Gastrocnemius medialis (tissue), 4 donors: ENCODE measurements at regions of chr20 and their contacts with region 1.

Region 1: GRCh38 chr20:54219751-54220426 is 12.0 kb downstream of the PFDN4 start:
- DNase-seq: no peak
- ATAC-seq: no peak
- H3K4me3 ChIP-seq: no peak overlapping the region
- H3K27ac ChIP-seq: no peak overlapping the region
- H3K4me1 ChIP-seq: peaks cover 29 to 41% of the 10 kb centered on the region in 2 donors
- H3K27me3 ChIP-seq: no peaks in the 10 kb centered on the region
- CTCF ChIP-seq: peak in 4 of 5 experiments; percentile 26 to 45 (median 36)
- POLR2A ChIP-seq: no peak

Region 2: GRCh38 chr20:54173653-54174456 is 46.0 kb before region 1 on chr20 and contains the start of gene CYP24A1:
- in situ Hi-C with region 1: no loop called
- intact Hi-C with region 1: no loop called
- DNase-seq: no peak
- ATAC-seq: no peak
- H3K4me3 ChIP-seq: peak within 1 kb of the TSS in 1 of 4 donors; percentile 10
- H3K27ac ChIP-seq: no peak within 1 kb of the TSS
- H3K4me1 ChIP-seq: peaks cover 0 to 10% of the 10 kb centered on the region in 2 donors
- H3K27me3 ChIP-seq: peaks cover 59 to 62% (median 60%) of the 10 kb centered on the region in 3 donors
- CTCF ChIP-seq: no peak
- POLR2A ChIP-seq: no peak
- total RNA-seq, gene CYP24A1: 0.20 TPM in 1 of 4 donors, not detected in the others

Region 3: DNA sequence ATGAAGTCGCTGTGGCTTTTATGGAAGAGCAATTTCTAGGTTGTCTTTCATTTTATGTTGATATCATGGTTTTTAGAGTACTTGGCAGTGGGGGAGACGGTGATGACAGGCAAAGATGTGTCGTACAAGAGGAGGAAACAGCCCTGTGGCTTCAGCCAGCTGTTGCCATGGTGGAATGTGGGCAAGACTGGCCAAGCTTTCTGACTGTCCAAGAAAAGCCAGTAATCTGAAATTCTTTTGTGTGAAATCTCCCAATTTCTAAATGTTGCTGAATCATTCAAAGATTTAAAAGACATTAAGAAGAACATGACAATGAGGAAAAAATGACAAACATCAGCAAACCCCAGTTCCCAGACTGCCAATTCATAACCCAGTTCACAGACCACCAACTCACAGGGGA is 11.1 kb after region 1 on chr20:
- in situ Hi-C with region 1: no loop called
- intact Hi-C with region 1: no loop called
- DNase-seq: no peak
- ATAC-seq: no peak
- H3K4me3 ChIP-seq: no peak overlapping the region
- H3K27ac ChIP-seq: no peak overlapping the region
- H3K4me1 ChIP-seq: no peaks in the 10 kb centered on the region
- H3K27me3 ChIP-seq: no peaks in the 10 kb centered on the region
- CTCF ChIP-seq: no peak
- POLR2A ChIP-seq: no peak

Region 4: GRCh38 chr20:54257071-54257840 is 37.4 kb after region 1 on chr20:
- in situ Hi-C with region 1: no loop called
- intact Hi-C with region 1: loop called (anchors 2 kb)
- DNase-seq: peak; percentile 10 to 20
- ATAC-seq: peak; percentile 88 to 98
- H3K4me3 ChIP-seq: no peak overlapping the region
- H3K27ac ChIP-seq: peak overlapping the region in 1 of 4 donors; percentile 40
- H3K4me1 ChIP-seq: no peaks in the 10 kb centered on the region
- H3K27me3 ChIP-seq: no peaks in the 10 kb centered on the region
- CTCF ChIP-seq: no peak
- POLR2A ChIP-seq: no peak

Region 5: GRCh38 chr20:54320115-54320607 is 100.3 kb after region 1 on chr20:
- in situ Hi-C with region 1: no loop called
- intact Hi-C with region 1: loop called (anchors 10 kb)
- DNase-seq: no peak
- ATAC-seq: no peak
- H3K4me3 ChIP-seq: no peak overlapping the region
- H3K27ac ChIP-seq: no peak overlapping the region
- H3K4me1 ChIP-seq: peaks cover 11 to 12% of the 10 kb centered on the region in 2 donors
- H3K27me3 ChIP-seq: no peaks in the 10 kb centered on the region
- CTCF ChIP-seq: no peak
- POLR2A ChIP-seq: no peak

Region 6: DNA sequence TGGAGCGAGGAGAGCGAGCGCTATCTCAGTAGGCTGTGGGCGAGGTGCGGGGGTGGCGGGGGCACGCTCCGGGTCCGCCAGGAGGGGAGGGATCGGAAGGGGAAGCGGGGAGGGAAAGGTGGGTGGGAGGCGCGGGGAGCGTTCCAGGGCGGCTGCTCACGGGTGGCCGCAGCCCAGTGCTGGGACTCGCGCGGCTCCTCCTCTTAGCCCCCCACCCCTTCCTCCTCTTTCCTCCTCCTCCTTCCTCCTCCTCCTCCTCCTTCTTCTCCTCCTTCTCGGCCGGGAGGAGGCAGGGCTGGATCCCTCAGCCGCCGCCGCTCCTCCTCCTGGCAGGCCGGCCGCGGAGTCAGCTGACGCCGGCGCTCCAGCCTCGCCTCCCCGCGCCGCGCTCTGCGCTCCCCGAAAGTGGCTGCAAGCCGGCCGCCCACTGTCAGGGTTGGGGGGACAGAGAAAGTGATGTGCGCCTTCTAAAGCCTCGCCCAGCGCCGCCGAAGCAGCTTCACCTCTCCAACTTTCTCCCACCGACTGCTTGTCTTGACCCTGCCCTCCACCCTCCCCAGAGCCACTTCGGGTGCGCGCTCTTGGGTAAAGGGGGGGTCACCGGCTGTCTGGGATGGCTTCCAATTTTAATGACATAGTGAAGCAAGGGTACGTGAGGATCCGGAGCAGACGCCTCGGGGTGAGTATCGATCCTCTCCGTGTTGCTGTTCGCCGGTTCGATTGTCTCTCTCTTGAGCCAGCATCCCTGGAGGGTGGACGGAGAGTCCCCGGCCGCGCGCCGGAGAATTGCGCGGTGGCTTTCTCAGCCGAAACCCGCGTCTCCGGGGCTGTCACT is 255.7 kb after region 1 on chr20 and contains the start of gene DOK5:
- in situ Hi-C with region 1: no loop called
- intact Hi-C with region 1: loop called (anchors 5 kb)
- DNase-seq: peak; percentile 15 to 21
- ATAC-seq: peak; percentile 63 to 67
- H3K4me3 ChIP-seq: peak within 1 kb of the TSS; percentile 72 to 85 (median 80)
- H3K27ac ChIP-seq: peak within 1 kb of the TSS; percentile 66 to 80 (median 68)
- H3K4me1 ChIP-seq: peaks cover 9 to 11% of the 10 kb centered on the region in 2 donors
- H3K27me3 ChIP-seq: no peaks in the 10 kb centered on the region
- CTCF ChIP-seq: no peak
- POLR2A ChIP-seq: no peak
- total RNA-seq, gene DOK5: 1.2 to 12.7 (median 7.4) TPM

Region 7: DNA sequence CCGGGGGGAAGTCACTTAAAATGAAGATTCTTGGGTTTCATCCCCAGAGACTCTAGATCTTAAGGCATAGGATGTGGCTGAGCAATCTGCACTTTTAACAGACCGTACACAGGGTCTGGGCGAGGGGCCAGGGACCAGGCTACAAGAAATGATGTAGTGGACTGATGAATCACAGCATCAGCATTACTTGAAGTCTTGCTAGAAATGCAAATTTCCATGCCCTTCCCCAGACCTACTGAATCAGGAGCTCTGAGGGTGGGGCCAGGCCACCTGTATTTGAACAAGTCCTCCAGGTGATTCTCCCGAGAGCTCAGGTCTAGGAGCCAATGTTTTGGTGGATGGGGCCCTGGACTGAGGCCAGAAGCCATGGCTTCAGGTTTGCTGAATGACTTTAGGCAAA is 423.9 kb after region 1 on chr20:
- in situ Hi-C with region 1: loop called (anchors 5 to 10 kb)
- intact Hi-C with region 1: loop called (anchors 5 kb)
- DNase-seq: no peak
- ATAC-seq: no peak
- H3K4me3 ChIP-seq: no peak overlapping the region
- H3K27ac ChIP-seq: no peak overlapping the region
- H3K4me1 ChIP-seq: no peaks in the 10 kb centered on the region
- H3K27me3 ChIP-seq: no peaks in the 10 kb centered on the region
- CTCF ChIP-seq: no peak
- POLR2A ChIP-seq: no peak

Region 8: GRCh38 chr20:54649511-54649962 is 429.6 kb after region 1 on chr20:
- in situ Hi-C with region 1: loop called (anchors 5 to 10 kb)
- intact Hi-C with region 1: loop called (anchors 5 kb)
- DNase-seq: peak; percentile 13 to 54
- ATAC-seq: peak; percentile 50 to 65
- H3K4me3 ChIP-seq: no peak overlapping the region
- H3K27ac ChIP-seq: no peak overlapping the region
- H3K4me1 ChIP-seq: no peaks in the 10 kb centered on the region
- H3K27me3 ChIP-seq: no peaks in the 10 kb centered on the region
- CTCF ChIP-seq: peak in 4 of 5 experiments; percentile 26 to 71 (median 62)
- POLR2A ChIP-seq: no peak

Region 9: GRCh38 chr20:55515832-55516231 is 1295.9 kb after region 1 on chr20:
- in situ Hi-C with region 1: no loop called
- intact Hi-C with region 1: no loop called
- DNase-seq: no peak
- ATAC-seq: no peak
- H3K4me3 ChIP-seq: no peak overlapping the region
- H3K27ac ChIP-seq: no peak overlapping the region
- H3K4me1 ChIP-seq: no peaks in the 10 kb centered on the region
- H3K27me3 ChIP-seq: no peaks in the 10 kb centered on the region
- CTCF ChIP-seq: no peak
- POLR2A ChIP-seq: no peak